ENCODE measurements at regions of chr19 and their contacts with region 1.

Region 1: DNA sequence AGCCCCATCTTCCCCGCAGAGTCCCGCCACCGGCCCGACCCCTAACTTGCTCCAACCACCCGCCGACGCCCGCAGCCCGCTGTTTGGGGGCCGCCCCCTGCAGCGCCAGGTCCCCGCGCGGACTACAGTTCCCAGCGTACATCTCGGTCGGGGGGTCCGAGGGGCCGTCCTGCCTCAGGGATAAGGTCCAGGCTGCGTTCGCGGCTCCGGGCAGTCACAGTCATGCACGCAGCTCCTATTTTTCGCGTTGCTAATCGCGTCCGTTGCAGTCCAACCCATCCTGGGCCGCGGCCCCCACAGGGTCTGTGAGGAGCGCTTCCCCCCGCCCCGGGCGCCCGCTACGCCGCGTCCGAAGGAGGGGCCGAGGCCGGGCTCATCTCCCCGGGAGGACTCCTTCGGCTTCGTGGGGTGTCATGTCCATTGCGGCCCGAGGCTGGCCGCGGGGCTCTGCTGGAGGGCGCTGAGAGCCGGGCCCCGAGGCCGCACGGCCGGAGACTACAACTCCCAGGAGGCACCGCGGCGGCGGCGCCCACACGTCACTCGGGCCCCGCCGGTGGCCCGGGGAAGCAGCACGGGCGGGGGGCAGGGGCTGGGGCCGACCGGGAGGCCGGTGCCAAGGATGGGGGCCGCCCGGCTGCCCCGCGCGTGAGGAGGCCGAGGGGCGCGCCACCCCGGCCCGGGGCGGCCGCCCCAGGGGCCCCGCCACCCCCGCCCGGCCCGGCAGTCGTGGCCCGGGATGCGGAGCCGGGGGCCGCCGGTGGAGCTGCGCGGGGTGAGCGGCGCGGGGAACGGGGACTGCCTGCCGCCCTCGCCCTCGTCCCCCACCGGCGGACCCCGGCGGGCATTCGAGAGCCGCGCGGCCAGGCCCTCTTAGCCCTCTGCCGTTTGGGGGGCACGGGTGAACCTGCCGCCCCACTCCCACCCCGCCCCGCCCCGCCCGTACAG is at the start of gene MAP3K10:
- DNase-seq: peak; percentile 83
- ATAC-seq: peak; percentile 89
- H3K4me3 Mint-ChIP-seq: peak within 1 kb of the TSS; percentile 90
- H3K27ac Mint-ChIP-seq: peak within 1 kb of the TSS; percentile 86
- H3K4me1 Mint-ChIP-seq: peaks cover 31% of the 10 kb centered on the region
- H3K27me3 Mint-ChIP-seq: no peaks in the 10 kb centered on the region
- CTCF ChIP-seq: no peak
- total RNA-seq, gene MAP3K10: 16.4 and 20.5 TPM in 2 replicates

Region 2: DNA sequence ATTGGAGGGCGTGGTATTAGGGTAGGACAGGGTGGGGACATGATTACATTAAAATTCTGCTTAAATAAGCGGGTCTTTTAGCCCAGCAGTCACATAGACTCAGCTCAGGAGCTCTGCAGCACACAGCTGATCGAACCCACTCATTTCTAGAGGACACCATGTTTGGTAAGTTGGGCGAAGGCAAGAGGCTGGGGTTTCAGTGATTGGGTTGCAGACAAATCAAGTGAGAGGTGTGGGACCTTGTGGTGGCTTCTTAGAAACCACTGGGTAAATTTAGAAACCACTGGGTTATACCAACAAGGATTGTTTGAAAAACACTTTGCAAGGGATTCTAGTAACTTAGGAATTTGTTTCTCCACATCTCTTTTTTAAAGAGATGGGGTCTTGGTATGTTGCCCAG is 412.4 kb before region 1 on chr19 and contains the start of gene LEUTX:
- CTCF ChIA-PET with region 1: no interaction called
- POLR2A ChIA-PET with region 1: no interaction called
- intact Hi-C with region 1: no loop called
- DNase-seq: no peak
- ATAC-seq: no peak
- H3K4me3 Mint-ChIP-seq: no peak within 1 kb of the TSS
- H3K27ac Mint-ChIP-seq: no peak within 1 kb of the TSS
- H3K4me1 Mint-ChIP-seq: no peaks in the 10 kb centered on the region
- H3K27me3 Mint-ChIP-seq: peaks cover 19% of the 10 kb centered on the region
- CTCF ChIP-seq: no peak
- total RNA-seq, gene LEUTX: not detected in 2 replicates

Region 3: GRCh38 chr19:40165362-40165937 is 25.7 kb before region 1 on chr19:
- CTCF ChIA-PET with region 1: no interaction called
- POLR2A ChIA-PET with region 1: interaction called, 3 read pairs
- intact Hi-C with region 1: loop called (anchors 2 kb)
- DNase-seq: peak; percentile 39
- ATAC-seq: peak; percentile 66
- H3K4me3 Mint-ChIP-seq: peak overlapping the region; percentile 17
- H3K27ac Mint-ChIP-seq: peak overlapping the region; percentile 42
- H3K4me1 Mint-ChIP-seq: peaks cover 29% of the 10 kb centered on the region
- H3K27me3 Mint-ChIP-seq: no peaks in the 10 kb centered on the region
- CTCF ChIP-seq: no peak

Region 4: DNA sequence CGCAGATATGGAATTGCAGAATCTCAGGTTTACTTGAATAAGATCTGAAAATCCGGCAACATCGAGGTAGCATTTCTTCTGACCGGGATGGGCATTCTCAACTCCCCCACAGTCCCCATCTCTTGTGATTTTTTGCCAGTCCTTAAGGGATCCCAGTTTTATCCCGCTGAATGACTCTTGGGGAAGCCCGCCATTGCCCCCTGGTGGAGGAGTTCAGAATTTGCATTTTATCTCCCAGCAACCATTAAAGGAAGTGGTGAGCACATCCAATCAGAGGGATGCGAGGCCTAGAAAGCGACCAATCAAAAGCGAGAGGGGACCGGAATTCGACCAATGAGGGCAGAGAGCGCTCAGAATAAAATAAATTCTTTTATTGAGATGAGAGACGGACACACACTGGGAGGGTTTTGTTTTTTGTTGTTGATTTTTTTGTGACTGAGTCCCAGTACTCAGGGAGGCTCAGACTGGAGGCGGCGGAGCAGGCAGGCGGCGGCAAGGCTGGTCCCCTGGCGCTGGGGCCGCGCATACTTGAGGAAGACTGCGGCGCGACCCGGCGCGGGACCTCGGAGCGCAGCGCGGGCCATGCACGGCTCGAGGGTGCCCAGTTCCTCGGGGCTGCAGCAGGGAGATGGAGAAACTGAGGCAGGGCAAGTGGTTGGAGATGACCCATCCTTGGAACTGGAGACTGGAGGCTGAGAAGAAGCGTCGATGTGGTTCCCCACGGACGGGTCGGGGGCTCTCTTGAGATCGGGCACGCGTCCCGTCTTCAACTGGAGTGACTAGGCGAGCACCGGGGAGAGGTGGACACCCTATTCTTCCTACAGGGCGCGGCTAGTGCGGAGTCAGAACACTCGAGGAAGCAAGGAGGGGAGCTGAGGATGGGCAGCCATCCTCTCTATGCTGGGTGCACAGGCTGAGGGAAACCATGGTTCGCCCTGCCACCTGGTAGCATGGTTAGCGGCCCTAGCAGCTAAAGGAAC is 31.0 kb after region 1 on chr19:
- CTCF ChIA-PET with region 1: no interaction called
- POLR2A ChIA-PET with region 1: no interaction called
- intact Hi-C with region 1: loop called (anchors 2 kb)
- DNase-seq: peak; percentile 50
- ATAC-seq: peak; percentile 93
- H3K4me3 Mint-ChIP-seq: no peak overlapping the region
- H3K27ac Mint-ChIP-seq: peak overlapping the region; percentile 56
- H3K4me1 Mint-ChIP-seq: peaks cover 22% of the 10 kb centered on the region
- H3K27me3 Mint-ChIP-seq: peaks cover 48% of the 10 kb centered on the region
- CTCF ChIP-seq: no peak

Region 5: DNA sequence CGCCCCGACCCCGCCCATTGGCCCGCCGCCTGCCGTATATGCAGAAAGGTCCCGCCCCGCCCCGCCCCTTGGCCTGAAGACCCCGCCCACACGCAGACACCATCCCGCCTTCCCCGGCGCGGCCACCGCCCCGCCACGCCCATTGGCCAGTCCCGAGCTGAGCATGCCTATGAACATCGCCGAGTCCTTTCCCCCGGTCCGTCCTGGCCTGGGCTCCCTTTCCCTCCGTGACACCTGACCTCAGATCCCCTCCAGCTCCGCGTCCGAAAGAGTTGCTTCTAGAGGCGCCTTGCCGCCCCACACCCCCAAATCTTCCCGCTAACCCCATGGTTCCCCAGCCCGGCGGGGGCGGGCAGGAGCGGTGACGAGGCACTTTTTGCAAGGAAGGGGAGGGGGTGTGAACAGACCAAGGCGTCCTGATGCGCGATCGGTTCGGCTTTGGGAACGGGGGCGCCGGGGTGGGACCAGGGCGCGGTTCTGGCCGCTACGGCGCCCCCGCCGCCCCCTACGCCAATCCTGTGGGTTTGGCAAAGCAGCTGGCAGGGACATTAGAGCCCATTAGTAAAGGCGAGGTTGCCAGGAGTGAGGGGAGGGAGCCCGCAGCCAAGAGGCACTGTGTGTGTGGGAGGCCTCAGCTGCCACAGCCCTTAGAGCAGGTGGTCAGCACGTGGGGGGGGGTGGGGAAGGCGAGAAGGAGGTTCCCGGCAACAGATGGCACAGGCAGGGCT is 499.7 kb after region 1 on chr19:
- CTCF ChIA-PET with region 1: no interaction called
- POLR2A ChIA-PET with region 1: interaction called, 14 read pairs
- intact Hi-C with region 1: no loop called
- DNase-seq: peak; percentile 76
- ATAC-seq: peak; percentile 78
- H3K4me3 Mint-ChIP-seq: peak overlapping the region; percentile 95
- H3K27ac Mint-ChIP-seq: peak overlapping the region; percentile 89
- H3K4me1 Mint-ChIP-seq: peaks cover 16% of the 10 kb centered on the region
- H3K27me3 Mint-ChIP-seq: no peaks in the 10 kb centered on the region
- CTCF ChIP-seq: no peak

Measured in activated B cell treated with CpG ODN at 0.5 μM for 24 hours (primary cell).